ENCODE measurements at regions of chr11 and their contacts with region 1.

Region 1: GRCh38 chr11:27158722-27159679 is 118.4 kb downstream of the BBOX1 start:
- DNase-seq: peak; percentile 17
- H3K4me3 Mint-ChIP-seq: no peak overlapping the region
- H3K27ac Mint-ChIP-seq: no peak overlapping the region
- H3K4me1 Mint-ChIP-seq: no peaks in the 10 kb centered on the region
- H3K27me3 Mint-ChIP-seq: no peaks in the 10 kb centered on the region

Region 2: DNA sequence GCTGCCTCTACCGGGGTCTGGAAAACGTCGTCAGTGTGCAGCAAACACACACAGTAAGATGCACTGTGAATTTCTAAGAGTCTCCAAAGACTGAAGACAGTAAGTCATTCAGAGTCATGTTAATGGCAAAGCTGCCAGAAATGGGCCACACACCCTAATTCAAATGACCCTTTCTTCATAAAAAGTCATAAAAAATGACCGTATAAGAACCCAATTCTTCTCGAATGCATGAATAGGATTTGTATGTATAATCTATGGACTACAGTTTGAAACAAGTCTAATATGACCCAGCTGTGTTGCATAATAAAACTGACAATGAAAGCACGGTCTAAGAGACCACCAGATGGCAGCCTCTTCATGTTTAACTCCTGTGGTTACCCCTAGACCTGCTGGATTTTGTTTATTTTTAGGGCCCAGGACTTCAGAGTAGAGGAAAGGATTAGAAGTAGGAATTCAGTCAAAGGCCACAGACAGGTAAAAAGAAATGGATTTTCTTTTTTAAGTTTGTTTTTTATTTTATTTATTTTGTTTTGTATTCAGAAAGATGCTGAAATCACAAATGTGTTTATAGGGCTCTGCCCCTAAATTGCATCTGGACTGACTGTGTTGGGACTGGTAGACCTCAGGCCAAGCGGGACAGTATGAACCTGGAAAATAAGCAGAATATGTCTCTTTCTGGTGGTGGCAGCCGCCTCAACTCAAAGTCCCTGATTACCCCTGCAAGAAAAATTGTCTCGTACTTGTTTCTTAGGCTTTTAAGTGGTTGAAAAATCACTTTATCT is 405.1 kb before region 1 on chr11:
- CTCF ChIA-PET with region 1: interaction called, 3 read pairs
- POLR2A ChIA-PET with region 1: no interaction called
- intact Hi-C with region 1: loop called (anchors 2 kb)
- DNase-seq: no peak
- H3K4me3 Mint-ChIP-seq: no peak overlapping the region
- H3K27ac Mint-ChIP-seq: no peak overlapping the region
- H3K4me1 Mint-ChIP-seq: no peaks in the 10 kb centered on the region
- H3K27me3 Mint-ChIP-seq: no peaks in the 10 kb centered on the region

Measured in activated CD4-positive, alpha-beta memory T cell treated with anti-CD3 and anti-CD28 coated beads for 36 hours (primary cell).